ENCODE measurements at regions of chr6 and their contacts with region 1.

Region 1: DNA sequence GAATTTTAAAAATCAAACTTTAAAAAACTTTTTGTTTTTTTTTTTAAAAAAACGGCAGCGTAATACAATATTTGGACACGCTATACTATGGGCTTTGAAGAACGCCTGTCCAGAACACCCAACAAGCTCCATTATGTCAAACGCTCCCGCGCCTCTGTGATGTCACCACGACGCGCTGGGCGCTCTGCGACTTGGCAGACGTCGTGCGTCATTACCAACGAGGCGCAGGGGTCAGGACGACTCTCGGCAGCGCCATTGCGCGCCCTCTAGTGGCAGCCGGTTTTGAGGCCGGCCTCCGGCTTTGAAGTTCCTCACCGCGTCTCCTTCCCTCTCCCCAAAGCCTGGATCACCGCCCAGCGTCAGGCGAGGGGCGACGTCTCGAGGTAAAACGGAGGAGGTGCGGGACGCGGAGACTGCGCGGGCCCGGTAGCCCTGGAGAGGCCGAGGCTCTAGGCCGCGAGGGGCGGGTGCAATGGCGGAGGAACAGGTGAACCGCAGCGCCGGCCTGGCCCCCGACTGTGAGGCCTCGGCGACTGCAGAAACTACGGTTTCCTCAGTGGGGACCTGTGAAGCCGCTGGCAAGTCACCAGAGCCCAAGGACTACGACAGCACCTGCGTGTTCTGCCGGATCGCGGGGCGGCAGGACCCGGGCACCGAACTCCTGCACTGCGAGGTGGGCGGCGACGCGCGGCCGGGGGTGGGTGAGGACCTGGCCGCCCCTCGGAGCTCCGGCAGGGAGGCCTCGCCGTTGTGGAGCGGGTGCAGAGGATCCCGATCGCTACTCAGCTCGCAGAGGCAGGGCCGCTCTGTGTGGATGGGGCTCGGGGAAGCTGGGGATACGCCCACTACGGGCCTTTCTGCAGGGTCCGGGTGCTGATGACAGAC is at the start of gene HINT3:
- DNase-seq: peak; percentile 96
- H3K4me3 Mint-ChIP-seq: no peak within 1 kb of the TSS
- H3K27ac Mint-ChIP-seq: no peak within 1 kb of the TSS
- H3K4me1 Mint-ChIP-seq: no peaks in the 10 kb centered on the region
- H3K27me3 Mint-ChIP-seq: no peaks in the 10 kb centered on the region
- CTCF ChIP-seq: peak; percentile 97
- total RNA-seq, gene HINT3: 17.9 and 20.2 TPM in 2 replicates

Region 2: GRCh38 chr6:125858427-125859320 is 98.1 kb before region 1 on chr6:
- CTCF ChIA-PET with region 1: interaction called, 156 read pairs
- POLR2A ChIA-PET with region 1: interaction called, 20 read pairs
- intact Hi-C with region 1: loop called (anchors 1 kb)
- DNase-seq: peak; percentile 86
- H3K4me3 Mint-ChIP-seq: no peak overlapping the region
- H3K27ac Mint-ChIP-seq: peak overlapping the region; percentile 49
- H3K4me1 Mint-ChIP-seq: peaks cover 25% of the 10 kb centered on the region
- H3K27me3 Mint-ChIP-seq: no peaks in the 10 kb centered on the region
- CTCF ChIP-seq: peak; percentile 61

Region 3: DNA sequence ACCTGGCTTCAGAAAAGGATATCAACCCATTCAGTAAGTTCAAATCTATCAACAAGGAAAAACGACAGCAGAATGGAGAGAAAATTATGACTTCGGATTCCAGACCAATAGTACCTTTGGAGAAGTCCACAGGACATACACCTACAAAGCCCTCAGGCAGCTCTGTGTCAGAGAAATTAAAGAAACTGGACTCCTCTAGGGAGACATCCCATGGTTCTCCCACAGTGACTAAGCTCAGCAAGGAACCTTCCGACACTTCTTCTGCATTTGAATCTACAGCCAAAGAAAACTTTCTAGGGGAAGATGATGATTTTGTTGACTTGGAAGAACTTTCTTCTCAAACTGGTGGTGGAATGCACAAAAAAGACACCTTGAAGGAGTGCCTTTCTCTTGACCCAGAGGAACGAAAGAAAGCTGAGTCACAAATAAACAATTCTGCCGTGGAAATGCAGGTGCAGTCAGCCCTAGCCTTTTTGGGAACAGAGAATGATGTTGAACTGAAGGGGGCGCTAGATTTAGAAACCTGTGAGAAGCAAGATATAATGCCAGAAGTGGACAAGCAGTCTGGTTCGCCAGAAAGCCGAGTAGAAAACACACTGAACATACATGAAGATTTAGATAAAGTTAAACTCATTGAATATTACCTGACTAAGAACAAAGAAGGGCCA is 67.6 kb before region 1 on chr6:
- CTCF ChIA-PET with region 1: interaction called, 23 read pairs
- POLR2A ChIA-PET with region 1: interaction called, 3 read pairs
- intact Hi-C with region 1: loop called (anchors 1 kb)
- DNase-seq: peak; percentile 77
- H3K4me3 Mint-ChIP-seq: no peak overlapping the region
- H3K27ac Mint-ChIP-seq: peak overlapping the region; percentile 75
- H3K4me1 Mint-ChIP-seq: peaks cover 7% of the 10 kb centered on the region
- H3K27me3 Mint-ChIP-seq: no peaks in the 10 kb centered on the region
- CTCF ChIP-seq: peak; percentile 35

Region 4: GRCh38 chr6:125906158-125906998 is 50.4 kb before region 1 on chr6:
- CTCF ChIA-PET with region 1: interaction called, 38 read pairs
- POLR2A ChIA-PET with region 1: interaction called, 30 read pairs
- intact Hi-C with region 1: loop called (anchors 2 kb)
- DNase-seq: peak; percentile 69
- H3K4me3 Mint-ChIP-seq: no peak overlapping the region
- H3K27ac Mint-ChIP-seq: peak overlapping the region; percentile 24
- H3K4me1 Mint-ChIP-seq: peaks cover 41% of the 10 kb centered on the region
- H3K27me3 Mint-ChIP-seq: no peaks in the 10 kb centered on the region
- CTCF ChIP-seq: peak; percentile 59

Region 5: GRCh38 chr6:125923987-125924568 is 32.7 kb before region 1 on chr6:
- CTCF ChIA-PET with region 1: interaction called, 65 read pairs
- POLR2A ChIA-PET with region 1: interaction called, 103 read pairs
- intact Hi-C with region 1: loop called (anchors 2 kb)
- DNase-seq: peak; percentile 73
- H3K4me3 Mint-ChIP-seq: peak overlapping the region; percentile 34
- H3K27ac Mint-ChIP-seq: peak overlapping the region; percentile 80
- H3K4me1 Mint-ChIP-seq: peaks cover 39% of the 10 kb centered on the region
- H3K27me3 Mint-ChIP-seq: no peaks in the 10 kb centered on the region
- CTCF ChIP-seq: no peak

Region 6: GRCh38 chr6:125968493-125968892 is 11.7 kb after region 1 on chr6:
- CTCF ChIA-PET with region 1: interaction called, 34 read pairs
- POLR2A ChIA-PET with region 1: interaction called, 6 read pairs
- intact Hi-C with region 1: no loop called
- DNase-seq: no peak
- H3K4me3 Mint-ChIP-seq: no peak overlapping the region
- H3K27ac Mint-ChIP-seq: no peak overlapping the region
- H3K4me1 Mint-ChIP-seq: no peaks in the 10 kb centered on the region
- H3K27me3 Mint-ChIP-seq: no peaks in the 10 kb centered on the region
- CTCF ChIP-seq: no peak

Region 7: DNA sequence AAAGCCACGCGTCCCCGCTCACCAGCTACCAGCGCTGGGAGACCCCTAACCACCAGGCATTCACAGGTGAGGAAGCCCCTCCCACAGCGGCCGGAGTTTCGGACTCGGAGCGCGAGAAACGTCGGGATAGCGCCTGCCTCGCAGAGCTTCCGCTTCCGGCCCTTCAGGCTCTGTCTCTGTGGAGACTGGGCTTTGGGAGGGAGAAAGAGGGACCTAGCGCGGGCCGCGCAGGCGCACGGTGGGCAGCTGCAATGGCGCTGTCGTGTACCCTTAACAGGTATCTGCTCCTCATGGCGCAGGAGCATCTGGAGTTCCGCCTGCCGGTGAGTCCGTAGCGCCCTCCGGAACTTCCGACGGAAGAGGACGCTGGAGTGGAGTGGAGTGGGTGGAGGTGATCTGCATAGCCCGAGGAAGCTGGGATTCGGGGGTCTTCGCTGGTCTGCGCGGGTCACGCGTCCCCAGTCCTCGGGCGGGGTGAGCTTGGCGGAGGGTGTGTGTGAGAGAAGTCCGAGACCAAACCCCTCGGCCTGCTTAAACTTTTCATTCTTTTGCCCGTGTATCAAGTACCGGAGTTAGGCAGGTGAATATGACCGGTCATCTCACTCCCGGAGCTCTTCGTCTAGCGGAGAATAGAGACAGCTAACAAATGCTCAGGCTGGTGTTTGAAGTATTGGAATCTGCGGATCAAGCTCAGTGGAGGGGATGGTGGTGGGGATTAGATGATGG is 29.7 kb after region 1 on chr6 and contains the start of gene TRMT11:
- CTCF ChIA-PET with region 1: interaction called, 8 read pairs
- POLR2A ChIA-PET with region 1: interaction called, 36 read pairs
- intact Hi-C with region 1: no loop called
- DNase-seq: peak; percentile 92
- H3K4me3 Mint-ChIP-seq: no peak within 1 kb of the TSS
- H3K27ac Mint-ChIP-seq: no peak within 1 kb of the TSS
- H3K4me1 Mint-ChIP-seq: no peaks in the 10 kb centered on the region
- H3K27me3 Mint-ChIP-seq: no peaks in the 10 kb centered on the region
- CTCF ChIP-seq: no peak
- total RNA-seq, gene TRMT11: 28.8 and 32.5 TPM in 2 replicates

Region 8: GRCh38 chr6:126091507-126091906 is 134.8 kb after region 1 on chr6:
- CTCF ChIA-PET with region 1: no interaction called
- POLR2A ChIA-PET with region 1: no interaction called
- intact Hi-C with region 1: no loop called
- DNase-seq: no peak
- H3K4me3 Mint-ChIP-seq: no peak overlapping the region
- H3K27ac Mint-ChIP-seq: no peak overlapping the region
- H3K4me1 Mint-ChIP-seq: no peaks in the 10 kb centered on the region
- H3K27me3 Mint-ChIP-seq: no peaks in the 10 kb centered on the region
- CTCF ChIP-seq: no peak

Measured in MCF 10A (cell line).